ENCODE measurements at regions of chr21 and their contacts with region 1.

Region 1: GRCh38 chr21:37452227-37452626 is 85.7 kb downstream of the DYRK1A start:
- DNase-seq: peak in 6 of 10 donors; percentile 29 to 63 (median 57)
- H3K4me3 ChIP-seq: no peak overlapping the region
- H3K27ac ChIP-seq: peak overlapping the region in 30 of 59 donors; percentile 1 to 69 (median 24)
- H3K27me3 ChIP-seq: no peaks in the 10 kb centered on the region
- CTCF ChIP-seq: no peak

Region 2: GRCh38 chr21:37267269-37268184 is 184.7 kb before region 1 on chr21 and contains the start of gene VPS26C:
- intact Hi-C with region 1: loop called in 1 of 2 experiments (anchors 10 kb)
- DNase-seq: peak; percentile 94 to 99 (median 98)
- H3K4me3 ChIP-seq: peak within 1 kb of the TSS; percentile 62 to 99 (median 92)
- H3K27ac ChIP-seq: peak within 1 kb of the TSS; percentile 89 to 100 (median 98)
- H3K27me3 ChIP-seq: no peaks in the 10 kb centered on the region
- CTCF ChIP-seq: peak in 20 of 56 donors; percentile 5 to 38 (median 18)
- total RNA-seq, gene VPS26C: 32.9 to 58.9 (median 44.4) TPM

Region 3: GRCh38 chr21:37484535-37485474 is 32.6 kb after region 1 on chr21:
- intact Hi-C with region 1: no loop called
- DNase-seq: no peak
- H3K4me3 ChIP-seq: no peak overlapping the region
- H3K27ac ChIP-seq: peak overlapping the region in 4 of 59 donors; percentile 11 to 21 (median 18)
- H3K27me3 ChIP-seq: no peaks in the 10 kb centered on the region
- CTCF ChIP-seq: no peak